Activated CD8-positive, alpha-beta memory T cell treated with anti-CD3 and anti-CD28 coated beads, Interleukin-2, amount 10 ng/mL, durations not matched to agents 7 days and 5 days (primary cell): ENCODE measurements at regions of chr17 and their contacts with region 1.

Region 1: GRCh38 chr17:8294814-8295316 is 335 bp downstream of the SLC25A35 start:
- DNase-seq: no peak
- ATAC-seq: no peak
- H3K4me3 Mint-ChIP-seq: peak overlapping the region; percentile 90
- H3K27ac Mint-ChIP-seq: peak overlapping the region; percentile 95
- H3K4me1 Mint-ChIP-seq: peaks cover 39% of the 10 kb centered on the region
- H3K27me3 Mint-ChIP-seq: no peaks in the 10 kb centered on the region

Region 2: DNA sequence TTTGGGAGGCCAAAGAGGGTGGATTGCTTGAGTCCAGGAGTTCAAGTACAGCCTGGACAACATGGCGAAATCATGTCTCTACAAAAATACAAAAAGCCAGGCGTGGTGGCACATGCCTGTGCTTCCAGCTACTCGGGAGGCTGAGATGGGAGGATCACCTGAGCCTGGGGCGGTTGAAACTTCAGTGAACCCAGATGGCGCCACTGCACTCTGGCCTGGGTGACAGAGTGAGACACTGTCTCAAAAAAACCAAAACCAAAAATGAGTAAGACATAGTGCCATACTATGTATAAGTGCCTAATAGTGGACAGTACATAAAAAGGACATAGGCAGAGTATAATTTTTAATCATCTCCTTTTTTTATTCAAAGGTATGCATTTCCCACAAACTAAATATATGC is 51.0 kb before region 1 on chr17:
- CTCF ChIA-PET with region 1: interaction called, 15 read pairs
- DNase-seq: peak; percentile 51
- ATAC-seq: no peak
- H3K4me3 Mint-ChIP-seq: no peak overlapping the region
- H3K27ac Mint-ChIP-seq: peak overlapping the region; percentile 64
- H3K4me1 Mint-ChIP-seq: peaks cover 33% of the 10 kb centered on the region
- H3K27me3 Mint-ChIP-seq: no peaks in the 10 kb centered on the region

Region 3: GRCh38 chr17:8248751-8249607 is 45.9 kb before region 1 on chr17 and contains the start of gene PFAS:
- CTCF ChIA-PET with region 1: interaction called, 15 read pairs
- DNase-seq: peak; percentile 98
- ATAC-seq: peak; percentile 75
- H3K4me3 Mint-ChIP-seq: peak within 1 kb of the TSS; percentile 98
- H3K27ac Mint-ChIP-seq: peak within 1 kb of the TSS; percentile 100
- H3K4me1 Mint-ChIP-seq: peaks cover 38% of the 10 kb centered on the region
- H3K27me3 Mint-ChIP-seq: no peaks in the 10 kb centered on the region
- total RNA-seq, gene PFAS: 75.1 to 113 TPM

Region 4: DNA sequence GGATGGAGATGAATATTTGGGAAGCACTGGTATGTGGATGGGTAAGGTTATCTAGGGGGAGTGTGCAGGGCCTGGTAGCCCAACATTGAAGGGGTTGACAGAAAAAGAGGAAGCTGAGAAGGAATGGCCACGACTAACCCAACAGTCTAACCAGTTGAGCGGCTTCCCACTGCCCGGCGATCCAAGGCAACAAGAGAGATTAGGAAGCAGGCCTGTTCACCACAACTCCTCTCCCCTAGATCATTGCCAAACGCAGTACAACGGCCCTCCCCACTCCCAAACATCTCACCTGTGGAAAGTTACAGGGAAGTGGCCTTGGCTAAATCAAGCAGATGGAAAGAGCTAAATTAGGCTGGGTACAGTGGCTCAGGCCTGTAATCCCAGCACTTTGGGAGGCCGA is 17.5 kb before region 1 on chr17:
- CTCF ChIA-PET with region 1: no interaction called
- DNase-seq: no peak
- ATAC-seq: no peak
- H3K4me3 Mint-ChIP-seq: no peak overlapping the region
- H3K27ac Mint-ChIP-seq: no peak overlapping the region
- H3K4me1 Mint-ChIP-seq: no peaks in the 10 kb centered on the region
- H3K27me3 Mint-ChIP-seq: no peaks in the 10 kb centered on the region

Region 5: DNA sequence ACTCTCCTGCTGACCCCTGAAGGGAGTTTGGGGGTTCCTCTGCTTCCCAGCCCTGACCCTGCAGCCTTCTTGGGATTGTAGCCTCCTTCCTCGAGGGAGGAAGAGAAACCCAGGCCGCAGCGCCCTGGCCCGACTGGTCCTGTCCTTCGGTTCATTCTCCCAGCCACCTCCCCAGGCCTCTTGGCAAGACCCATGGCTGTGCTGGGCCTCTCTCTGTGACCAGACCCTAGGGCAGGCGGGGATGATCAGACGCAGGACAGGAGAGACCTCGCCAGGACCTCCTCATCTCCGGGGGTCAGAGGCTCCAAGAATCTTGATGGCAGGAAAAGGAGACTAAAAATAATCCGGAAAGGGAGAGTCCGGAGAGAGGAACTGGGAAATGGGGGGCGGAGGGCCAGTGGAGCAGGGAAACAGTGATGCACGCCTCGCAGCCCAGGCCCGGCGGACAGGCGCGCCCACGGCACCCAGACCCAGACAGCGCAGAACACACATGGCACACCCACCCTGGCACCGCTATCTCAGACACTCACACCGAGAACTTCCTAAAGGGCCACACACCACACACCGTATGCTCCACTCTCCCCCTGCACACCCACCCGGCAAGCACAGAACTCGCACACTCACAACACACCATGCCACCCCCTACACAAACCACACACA is 16.4 kb after region 1 on chr17:
- CTCF ChIA-PET with region 1: no interaction called
- DNase-seq: no peak
- ATAC-seq: no peak
- H3K4me3 Mint-ChIP-seq: no peak overlapping the region
- H3K27ac Mint-ChIP-seq: no peak overlapping the region
- H3K4me1 Mint-ChIP-seq: no peaks in the 10 kb centered on the region
- H3K27me3 Mint-ChIP-seq: peaks cover 16% of the 10 kb centered on the region

Region 6: GRCh38 chr17:8359769-8360168 is 64.9 kb after region 1 on chr17:
- CTCF ChIA-PET with region 1: no interaction called
- DNase-seq: no peak
- ATAC-seq: no peak
- H3K4me3 Mint-ChIP-seq: no peak overlapping the region
- H3K27ac Mint-ChIP-seq: no peak overlapping the region
- H3K4me1 Mint-ChIP-seq: peaks cover 15% of the 10 kb centered on the region
- H3K27me3 Mint-ChIP-seq: peaks cover 4% of the 10 kb centered on the region